ENCODE measurements at regions of chr3 and their contacts with region 1.

Region 1: DNA sequence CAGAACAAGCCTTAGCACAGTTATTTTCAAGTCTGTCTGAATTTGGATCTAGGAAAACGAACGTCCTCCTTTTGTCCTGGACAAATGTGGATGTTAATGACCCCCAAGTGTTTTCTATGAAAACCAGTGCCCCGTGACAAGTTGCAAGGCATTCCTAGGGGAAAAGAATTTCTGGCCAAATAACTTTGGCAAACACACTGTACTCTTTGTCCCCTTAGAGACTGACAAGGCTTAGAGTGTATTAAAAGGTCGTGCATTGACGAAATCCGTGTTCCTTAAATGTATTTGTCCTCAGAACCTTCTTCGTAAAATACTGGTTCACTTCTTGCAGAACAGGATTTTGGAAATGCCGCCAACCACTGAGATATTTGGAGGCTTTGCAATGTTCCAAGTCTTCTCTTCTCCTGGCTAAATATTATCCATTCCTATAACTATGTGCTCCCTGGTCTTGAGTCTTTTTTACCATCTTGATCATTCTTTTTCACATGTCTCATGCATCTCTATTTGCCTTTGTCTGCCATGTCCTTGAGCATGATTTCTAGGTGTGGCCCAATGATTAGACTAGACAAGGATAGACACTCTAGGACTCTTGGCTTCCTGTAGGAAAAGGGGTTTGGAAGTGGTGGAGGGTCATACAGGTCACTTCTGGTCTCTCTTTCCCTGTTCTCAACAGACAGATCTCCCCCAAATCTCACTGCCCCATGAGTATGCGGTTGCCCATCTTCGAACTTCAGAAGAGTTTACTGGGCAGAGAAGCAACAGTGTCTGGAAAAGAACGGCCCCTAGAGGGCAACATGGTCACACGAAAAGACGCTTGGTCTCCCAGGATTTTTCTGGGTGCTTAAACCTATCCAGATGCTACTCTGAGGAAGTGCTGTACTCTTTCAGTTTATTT is 117.5 kb downstream of the EDEM1 start:
- DNase-seq: peak; percentile 61
- H3K4me3 Mint-ChIP-seq: no peak overlapping the region
- H3K27ac Mint-ChIP-seq: no peak overlapping the region
- H3K4me1 Mint-ChIP-seq: no peaks in the 10 kb centered on the region
- H3K27me3 Mint-ChIP-seq: no peaks in the 10 kb centered on the region

Region 2: DNA sequence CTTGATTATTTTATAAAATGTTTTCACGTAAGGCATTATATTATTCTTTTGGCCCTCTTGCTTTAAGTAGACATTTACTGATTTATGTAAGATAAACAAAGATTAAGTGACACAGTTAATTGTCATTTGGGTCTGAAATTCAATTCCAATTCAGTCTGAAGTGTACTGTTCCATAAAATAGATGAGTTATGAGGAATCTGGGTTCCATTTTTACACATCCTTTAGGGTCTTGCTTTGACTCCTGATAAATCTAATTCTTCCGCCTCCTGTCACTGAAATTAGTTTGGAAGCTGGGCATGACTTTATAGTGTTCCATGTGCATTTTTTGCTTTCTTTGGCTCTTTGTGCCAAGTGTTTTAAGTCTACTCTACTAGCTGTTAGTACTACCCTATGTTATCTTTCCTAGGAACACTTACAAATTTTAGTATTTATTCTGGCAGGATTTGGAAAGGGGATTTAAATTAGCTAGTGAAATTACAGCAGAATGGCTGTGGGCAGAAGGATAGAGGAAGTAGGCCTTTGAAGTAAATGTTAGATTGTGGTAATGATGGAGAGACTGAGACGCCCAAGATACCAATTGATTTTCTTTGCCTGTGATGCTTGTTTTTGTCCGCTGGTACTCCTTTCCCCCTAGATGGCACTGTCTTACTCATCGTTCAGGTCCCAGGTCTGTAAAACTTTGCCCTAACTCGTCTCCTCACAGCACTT is 168.7 kb before region 1 on chr3:
- CTCF ChIA-PET with region 1: no interaction called
- POLR2A ChIA-PET with region 1: no interaction called
- intact Hi-C with region 1: loop called (anchors 5 kb)
- DNase-seq: peak; percentile 31
- H3K4me3 Mint-ChIP-seq: no peak overlapping the region
- H3K27ac Mint-ChIP-seq: peak overlapping the region; percentile 72
- H3K4me1 Mint-ChIP-seq: peaks cover 69% of the 10 kb centered on the region
- H3K27me3 Mint-ChIP-seq: no peaks in the 10 kb centered on the region

Region 3: GRCh38 chr3:5278666-5279065 is 26.4 kb before region 1 on chr3:
- CTCF ChIA-PET with region 1: no interaction called
- POLR2A ChIA-PET with region 1: no interaction called
- intact Hi-C with region 1: no loop called
- DNase-seq: no peak
- H3K4me3 Mint-ChIP-seq: no peak overlapping the region
- H3K27ac Mint-ChIP-seq: no peak overlapping the region
- H3K4me1 Mint-ChIP-seq: no peaks in the 10 kb centered on the region
- H3K27me3 Mint-ChIP-seq: peaks cover 1% of the 10 kb centered on the region

Region 4: DNA sequence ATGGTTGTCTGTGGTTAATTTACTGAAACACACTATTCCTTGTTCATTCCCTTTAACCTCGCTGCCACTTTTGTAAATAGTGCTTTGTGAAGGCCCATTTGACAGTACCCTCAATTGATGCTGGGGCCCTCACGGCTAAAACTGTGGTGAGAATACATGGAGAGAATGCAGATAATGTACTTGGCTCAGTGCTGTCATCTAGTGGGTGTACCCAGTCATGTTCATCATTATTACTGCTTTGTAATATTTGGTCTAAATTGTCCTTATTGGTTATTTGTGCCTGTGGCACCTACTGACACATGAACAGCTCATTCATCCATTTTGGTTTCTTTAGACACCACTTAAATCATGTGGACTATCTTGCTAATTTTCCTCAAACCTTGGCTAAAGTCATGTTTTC is 426.1 kb after region 1 on chr3:
- CTCF ChIA-PET with region 1: no interaction called
- POLR2A ChIA-PET with region 1: no interaction called
- intact Hi-C with region 1: loop called (anchors 5 kb)
- DNase-seq: no peak
- H3K4me3 Mint-ChIP-seq: no peak overlapping the region
- H3K27ac Mint-ChIP-seq: no peak overlapping the region
- H3K4me1 Mint-ChIP-seq: no peaks in the 10 kb centered on the region
- H3K27me3 Mint-ChIP-seq: no peaks in the 10 kb centered on the region

Region 5: DNA sequence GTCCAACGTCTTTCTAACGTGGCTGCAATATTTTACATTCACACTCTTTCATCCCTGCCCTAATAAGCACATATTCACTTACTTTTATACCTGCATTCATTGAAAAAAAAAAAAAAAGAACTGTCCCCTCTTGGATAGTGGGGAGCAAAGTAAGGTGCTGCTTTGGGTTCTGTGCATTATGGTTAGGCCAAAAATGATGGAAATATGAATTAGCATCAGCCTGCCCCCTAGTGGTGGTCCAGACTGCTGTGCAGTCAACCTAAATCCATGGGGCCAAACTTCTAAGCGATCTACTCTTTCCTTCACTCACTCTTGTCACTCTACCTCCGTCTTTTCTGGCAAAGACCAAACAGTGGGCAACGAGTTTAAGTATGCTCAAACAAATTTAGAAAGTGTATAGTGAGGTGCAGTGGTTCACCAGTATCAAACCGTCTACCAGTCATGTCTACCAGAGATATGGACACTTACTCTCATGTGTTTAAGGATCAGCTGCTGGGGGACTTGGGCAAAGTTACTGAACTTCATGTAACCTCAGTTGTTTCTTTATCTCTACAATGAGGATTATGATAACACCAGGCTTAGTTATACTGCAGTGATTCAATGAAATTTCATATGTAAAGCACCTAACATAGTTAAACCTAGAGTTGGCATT is 1494.4 kb after region 1 on chr3:
- CTCF ChIA-PET with region 1: no interaction called
- POLR2A ChIA-PET with region 1: no interaction called
- intact Hi-C with region 1: loop called (anchors 2 kb)
- DNase-seq: peak; percentile 44
- H3K4me3 Mint-ChIP-seq: no peak overlapping the region
- H3K27ac Mint-ChIP-seq: no peak overlapping the region
- H3K4me1 Mint-ChIP-seq: no peaks in the 10 kb centered on the region
- H3K27me3 Mint-ChIP-seq: no peaks in the 10 kb centered on the region

Region 6: GRCh38 chr3:7144696-7145308 is 1839.8 kb after region 1 on chr3:
- CTCF ChIA-PET with region 1: no interaction called
- POLR2A ChIA-PET with region 1: no interaction called
- intact Hi-C with region 1: loop called (anchors 10 kb)
- DNase-seq: no peak
- H3K4me3 Mint-ChIP-seq: no peak overlapping the region
- H3K27ac Mint-ChIP-seq: no peak overlapping the region
- H3K4me1 Mint-ChIP-seq: no peaks in the 10 kb centered on the region
- H3K27me3 Mint-ChIP-seq: no peaks in the 10 kb centered on the region

Measured in activated CD4-positive, alpha-beta memory T cell treated with anti-CD3 and anti-CD28 coated beads for 36 hours (primary cell).